Natural killer cell (primary cell): ENCODE measurements at regions of chr9 and their contacts with region 1.

Region 1: GRCh38 chr9:70340572-70340971 is 73.9 kb downstream of the KLF9 start:
- DNase-seq: peak in 1 of 2 donors; percentile 47
- ATAC-seq: no peak
- H3K4me3 ChIP-seq: no peak overlapping the region
- H3K4me3 Mint-ChIP-seq: no peak overlapping the region
- H3K27ac ChIP-seq: no peak overlapping the region
- H3K27ac Mint-ChIP-seq: no peak overlapping the region
- H3K4me1 ChIP-seq: no peaks in the 10 kb centered on the region
- H3K4me1 Mint-ChIP-seq: peaks cover 0 to 10% of the 10 kb centered on the region in 2 donors
- H3K27me3 ChIP-seq: no peaks in the 10 kb centered on the region
- H3K27me3 Mint-ChIP-seq: no peaks in the 10 kb centered on the region
- CTCF ChIP-seq: peak; percentile 72

Region 2: GRCh38 chr9:69829484-69829883 is 511.1 kb before region 1 on chr9:
- intact Hi-C with region 1: no loop called
- DNase-seq: peak in 1 of 2 donors; percentile 48
- ATAC-seq: no peak
- H3K4me3 ChIP-seq: no peak overlapping the region
- H3K4me3 Mint-ChIP-seq: no peak overlapping the region
- H3K27ac ChIP-seq: no peak overlapping the region
- H3K27ac Mint-ChIP-seq: no peak overlapping the region
- H3K4me1 ChIP-seq: no peaks in the 10 kb centered on the region
- H3K4me1 Mint-ChIP-seq: no peaks in the 10 kb centered on the region
- H3K27me3 ChIP-seq: no peaks in the 10 kb centered on the region
- H3K27me3 Mint-ChIP-seq: peaks cover 0 to 14% of the 10 kb centered on the region in 2 donors
- CTCF ChIP-seq: no peak

Region 3: GRCh38 chr9:70362952-70363351 is 22.4 kb after region 1 on chr9:
- intact Hi-C with region 1: no loop called
- DNase-seq: no peak
- ATAC-seq: no peak
- H3K4me3 ChIP-seq: no peak overlapping the region
- H3K4me3 Mint-ChIP-seq: no peak overlapping the region
- H3K27ac ChIP-seq: no peak overlapping the region
- H3K27ac Mint-ChIP-seq: no peak overlapping the region
- H3K4me1 ChIP-seq: no peaks in the 10 kb centered on the region
- H3K4me1 Mint-ChIP-seq: no peaks in the 10 kb centered on the region
- H3K27me3 ChIP-seq: no peaks in the 10 kb centered on the region
- H3K27me3 Mint-ChIP-seq: no peaks in the 10 kb centered on the region
- CTCF ChIP-seq: no peak

Region 4: GRCh38 chr9:70484210-70485130 is 143.9 kb after region 1 on chr9:
- intact Hi-C with region 1: loop called (anchors 2 kb)
- DNase-seq: peak in 1 of 2 donors; percentile 73
- ATAC-seq: peak; percentile 56 to 86 (median 73)
- H3K4me3 ChIP-seq: no peak overlapping the region
- H3K4me3 Mint-ChIP-seq: no peak overlapping the region
- H3K27ac ChIP-seq: no peak overlapping the region
- H3K27ac Mint-ChIP-seq: no peak overlapping the region
- H3K4me1 ChIP-seq: no peaks in the 10 kb centered on the region
- H3K4me1 Mint-ChIP-seq: peaks cover 4 to 5% of the 10 kb centered on the region in 2 donors
- H3K27me3 ChIP-seq: no peaks in the 10 kb centered on the region
- H3K27me3 Mint-ChIP-seq: peaks cover 0 to 4% of the 10 kb centered on the region in 2 donors
- CTCF ChIP-seq: peak; percentile 37

Region 5: DNA sequence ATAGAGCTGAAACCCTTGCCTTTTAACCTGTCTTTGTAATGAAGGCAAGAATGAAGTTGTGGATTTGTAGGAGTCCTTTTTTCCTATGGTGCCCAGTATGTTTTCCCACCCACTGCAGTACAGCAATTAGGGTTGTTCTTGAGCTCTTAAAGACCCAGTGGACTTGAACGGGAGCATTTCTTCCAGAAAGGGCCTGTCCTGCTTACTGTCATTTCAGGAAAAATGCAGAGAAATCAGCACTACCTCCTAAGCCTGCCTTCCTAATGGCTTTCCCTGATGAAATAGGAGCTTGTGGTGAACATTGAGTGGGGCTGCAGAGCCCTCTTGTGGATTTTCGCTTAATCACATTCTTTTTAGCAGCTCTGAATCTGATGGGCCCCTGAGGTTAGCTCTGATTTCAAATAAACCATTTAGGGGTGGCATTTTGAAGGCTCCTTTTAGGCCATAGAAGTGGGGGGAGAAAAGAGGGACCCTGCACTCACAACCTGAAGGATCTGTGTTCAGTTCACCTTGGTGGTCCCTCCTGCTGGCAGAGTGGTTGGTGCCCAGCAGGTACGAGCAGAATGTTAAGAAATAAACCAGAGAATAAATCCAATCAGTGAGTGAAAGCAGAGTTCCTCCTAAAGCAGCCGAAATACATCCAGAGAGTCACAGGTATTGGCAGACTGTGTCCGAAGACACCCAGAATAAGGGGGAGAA is 261.9 kb after region 1 on chr9:
- intact Hi-C with region 1: loop called (anchors 1 kb)
- DNase-seq: peak in 1 of 2 donors; percentile 76
- ATAC-seq: peak in 2 of 3 donors; percentile 67 to 79
- H3K4me3 ChIP-seq: no peak overlapping the region
- H3K4me3 Mint-ChIP-seq: no peak overlapping the region
- H3K27ac ChIP-seq: no peak overlapping the region
- H3K27ac Mint-ChIP-seq: no peak overlapping the region
- H3K4me1 ChIP-seq: no peaks in the 10 kb centered on the region
- H3K4me1 Mint-ChIP-seq: no peaks in the 10 kb centered on the region
- H3K27me3 ChIP-seq: no peaks in the 10 kb centered on the region
- H3K27me3 Mint-ChIP-seq: no peaks in the 10 kb centered on the region
- CTCF ChIP-seq: peak; percentile 74